Naive thymus-derived CD4-positive, alpha-beta T cell (primary cell): ENCODE measurements at regions of chr7 and their contacts with region 1.

Region 1: DNA sequence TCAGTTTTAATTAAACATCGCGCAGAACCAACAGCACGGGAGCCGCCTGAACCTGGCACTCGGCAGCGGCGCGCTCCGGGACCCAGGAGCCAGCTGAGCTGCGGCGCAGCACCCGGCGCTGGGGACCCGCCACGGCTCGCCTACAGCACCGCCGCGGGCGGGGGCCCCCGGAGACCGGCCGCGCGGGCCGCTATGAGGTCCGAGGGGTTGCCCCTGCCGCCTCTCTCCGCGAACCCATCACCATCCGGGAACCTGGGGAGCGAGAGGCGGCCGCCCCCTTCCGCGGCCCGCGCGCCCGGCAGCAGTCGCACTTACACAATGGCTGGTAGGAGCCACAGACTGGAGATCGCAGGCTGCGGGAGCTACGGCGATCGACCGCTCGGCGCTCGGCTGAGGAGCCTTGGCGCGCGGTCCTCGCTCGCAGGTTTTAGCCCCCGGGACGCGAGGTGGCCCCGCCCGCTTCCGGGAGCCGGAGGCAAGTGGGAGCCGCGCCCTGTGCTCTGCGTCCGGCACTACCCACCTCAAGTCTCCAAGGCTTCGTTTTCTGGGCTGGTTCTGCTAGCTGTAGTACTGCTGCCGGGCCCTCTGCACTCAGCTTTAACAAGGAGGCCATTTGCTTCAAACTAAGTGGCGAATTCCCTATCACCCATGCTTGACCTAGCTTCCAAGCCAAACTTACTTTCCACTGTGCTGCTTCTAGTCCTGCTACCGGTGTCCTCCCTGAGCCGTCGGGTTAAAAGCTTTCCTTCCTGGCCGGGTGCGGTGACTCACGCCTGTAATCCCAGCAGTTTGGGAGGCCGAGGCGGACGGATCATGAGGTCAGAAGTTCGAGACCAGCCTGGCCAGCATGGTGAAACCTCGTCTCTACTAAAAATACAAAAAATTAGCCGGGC is at the start of gene TPK1:
- DNase-seq: peak; percentile 79 to 93 (median 91)
- ATAC-seq: peak; percentile 96
- H3K4me3 ChIP-seq: peak within 1 kb of the TSS; percentile 90
- H3K4me3 Mint-ChIP-seq: peak within 1 kb of the TSS; percentile 92 to 99 (median 98)
- H3K27ac ChIP-seq: peak within 1 kb of the TSS; percentile 89
- H3K27ac Mint-ChIP-seq: peak within 1 kb of the TSS; percentile 97 to 100 (median 98)
- H3K4me1 ChIP-seq: peaks cover 8 to 28% of the 10 kb centered on the region in 2 donors
- H3K4me1 Mint-ChIP-seq: peaks cover 24 to 66% (median 37%) of the 10 kb centered on the region in 7 donors
- H3K27me3 ChIP-seq: no peaks in the 10 kb centered on the region
- H3K27me3 Mint-ChIP-seq: no peaks in the 10 kb centered on the region
- total RNA-seq, gene TPK1: 18.2 to 32.9 (median 26.3) TPM

Region 2: DNA sequence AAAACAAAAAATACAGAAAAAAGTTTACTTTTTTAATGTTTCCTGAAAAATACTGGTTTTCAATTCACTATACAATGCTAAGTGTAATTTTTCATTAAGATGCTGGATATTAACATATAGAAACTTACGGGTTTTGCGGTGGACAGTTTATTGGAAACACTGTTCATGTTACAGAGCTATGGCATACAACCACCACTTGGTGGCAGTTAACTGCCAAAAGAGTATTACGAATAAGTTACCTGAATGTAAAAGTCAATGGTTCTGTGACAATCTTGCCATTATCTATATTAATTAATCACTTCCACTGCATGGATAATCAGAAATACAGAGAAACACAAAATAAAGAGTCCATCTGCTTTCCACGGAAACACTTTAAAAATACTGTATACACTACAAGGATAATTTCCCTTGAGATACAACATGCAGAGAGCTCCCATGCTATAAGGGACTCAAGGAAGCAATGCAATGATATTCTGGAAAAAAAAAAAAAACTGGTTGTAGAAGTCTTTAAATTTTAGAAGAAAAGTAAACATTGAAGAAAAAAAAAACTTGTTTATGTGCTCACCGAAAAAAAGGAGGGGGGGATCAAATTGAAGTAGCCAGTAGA is 97.1 kb before region 1 on chr7:
- CTCF ChIA-PET with region 1: interaction called, 15 read pairs
- POLR2A ChIA-PET with region 1: interaction called, 33 read pairs
- intact Hi-C with region 1: loop called (anchors 1 kb)
- DNase-seq: peak in 7 of 9 donors; percentile 9 to 55 (median 43)
- ATAC-seq: peak; percentile 67
- H3K4me3 ChIP-seq: no peak overlapping the region
- H3K4me3 Mint-ChIP-seq: no peak overlapping the region
- H3K27ac ChIP-seq: no peak overlapping the region
- H3K27ac Mint-ChIP-seq: no peak overlapping the region
- H3K4me1 ChIP-seq: no peaks in the 10 kb centered on the region
- H3K4me1 Mint-ChIP-seq: peaks cover 0 to 15% (median 11%) of the 10 kb centered on the region in 7 donors
- H3K27me3 ChIP-seq: no peaks in the 10 kb centered on the region
- H3K27me3 Mint-ChIP-seq: no peaks in the 10 kb centered on the region

Region 3: GRCh38 chr7:144771174-144771573 is 64.7 kb before region 1 on chr7:
- CTCF ChIA-PET with region 1: interaction called, 3 read pairs
- POLR2A ChIA-PET with region 1: interaction called, 13 read pairs
- intact Hi-C with region 1: no loop called
- DNase-seq: no peak
- ATAC-seq: no peak
- H3K4me3 ChIP-seq: no peak overlapping the region
- H3K4me3 Mint-ChIP-seq: peak overlapping the region in 2 of 10 donors; percentile 8 to 20
- H3K27ac ChIP-seq: no peak overlapping the region
- H3K27ac Mint-ChIP-seq: peak overlapping the region in 1 of 9 donors; percentile 12
- H3K4me1 ChIP-seq: peaks cover 0 to 11% of the 10 kb centered on the region in 2 donors
- H3K4me1 Mint-ChIP-seq: peaks cover 4 to 65% (median 35%) of the 10 kb centered on the region in 7 donors
- H3K27me3 ChIP-seq: no peaks in the 10 kb centered on the region
- H3K27me3 Mint-ChIP-seq: no peaks in the 10 kb centered on the region

Region 4: DNA sequence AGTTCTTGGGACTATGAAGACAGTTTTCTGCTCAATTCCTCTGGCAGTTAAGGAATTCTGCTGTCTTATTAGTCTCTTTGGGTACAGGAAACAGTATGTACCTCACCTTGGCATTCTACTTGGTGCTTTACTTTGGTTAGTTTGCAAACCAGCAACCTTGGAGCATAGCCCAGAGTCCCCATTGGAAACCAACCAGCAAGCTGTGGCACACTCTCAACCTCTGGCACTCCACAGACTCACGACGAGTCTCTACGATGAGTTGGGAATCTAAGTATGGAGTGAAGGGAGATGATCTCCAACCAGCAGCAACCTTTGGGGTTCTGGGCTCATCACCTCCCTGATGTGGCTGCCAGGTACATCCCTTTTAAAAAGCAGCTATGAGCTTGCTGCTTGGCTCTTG is 43.8 kb before region 1 on chr7:
- CTCF ChIA-PET with region 1: interaction called, 3 read pairs
- POLR2A ChIA-PET with region 1: interaction called, 57 read pairs
- intact Hi-C with region 1: no loop called
- DNase-seq: no peak
- ATAC-seq: no peak
- H3K4me3 ChIP-seq: no peak overlapping the region
- H3K4me3 Mint-ChIP-seq: no peak overlapping the region
- H3K27ac ChIP-seq: no peak overlapping the region
- H3K27ac Mint-ChIP-seq: no peak overlapping the region
- H3K4me1 ChIP-seq: no peaks in the 10 kb centered on the region
- H3K4me1 Mint-ChIP-seq: peaks cover 7 to 31% (median 22%) of the 10 kb centered on the region in 7 donors
- H3K27me3 ChIP-seq: no peaks in the 10 kb centered on the region
- H3K27me3 Mint-ChIP-seq: no peaks in the 10 kb centered on the region

Region 5: GRCh38 chr7:144812379-144813283 is 23.3 kb before region 1 on chr7:
- CTCF ChIA-PET with region 1: interaction called, 20 read pairs
- POLR2A ChIA-PET with region 1: interaction called, 394 read pairs
- intact Hi-C with region 1: loop called (anchors 1 kb)
- DNase-seq: peak in 7 of 9 donors; percentile 65 to 79 (median 74)
- ATAC-seq: peak; percentile 94
- H3K4me3 ChIP-seq: peak overlapping the region; percentile 22
- H3K4me3 Mint-ChIP-seq: peak overlapping the region; percentile 63 to 85 (median 78)
- H3K27ac ChIP-seq: peak overlapping the region; percentile 71
- H3K27ac Mint-ChIP-seq: peak overlapping the region; percentile 77 to 95 (median 92)
- H3K4me1 ChIP-seq: peaks cover 20 to 50% of the 10 kb centered on the region in 2 donors
- H3K4me1 Mint-ChIP-seq: peaks cover 36 to 92% (median 84%) of the 10 kb centered on the region in 7 donors
- H3K27me3 ChIP-seq: no peaks in the 10 kb centered on the region
- H3K27me3 Mint-ChIP-seq: no peaks in the 10 kb centered on the region

Region 6: GRCh38 chr7:144854839-144855424 is 19.0 kb after region 1 on chr7:
- CTCF ChIA-PET with region 1: interaction called, 3 read pairs
- POLR2A ChIA-PET with region 1: interaction called, 9 read pairs
- intact Hi-C with region 1: loop called in 1 of 2 experiments (anchors 2 kb)
- DNase-seq: no peak
- ATAC-seq: no peak
- H3K4me3 ChIP-seq: no peak overlapping the region
- H3K4me3 Mint-ChIP-seq: no peak overlapping the region
- H3K27ac ChIP-seq: no peak overlapping the region
- H3K27ac Mint-ChIP-seq: no peak overlapping the region
- H3K4me1 ChIP-seq: no peaks in the 10 kb centered on the region
- H3K4me1 Mint-ChIP-seq: no peaks in the 10 kb centered on the region
- H3K27me3 ChIP-seq: no peaks in the 10 kb centered on the region
- H3K27me3 Mint-ChIP-seq: peaks cover 0 to 4% (median 0%) of the 10 kb centered on the region in 5 donors